Naive thymus-derived CD8-positive, alpha-beta T cell (primary cell): ENCODE measurements at regions of chr3 and their contacts with region 1.

Region 1: DNA sequence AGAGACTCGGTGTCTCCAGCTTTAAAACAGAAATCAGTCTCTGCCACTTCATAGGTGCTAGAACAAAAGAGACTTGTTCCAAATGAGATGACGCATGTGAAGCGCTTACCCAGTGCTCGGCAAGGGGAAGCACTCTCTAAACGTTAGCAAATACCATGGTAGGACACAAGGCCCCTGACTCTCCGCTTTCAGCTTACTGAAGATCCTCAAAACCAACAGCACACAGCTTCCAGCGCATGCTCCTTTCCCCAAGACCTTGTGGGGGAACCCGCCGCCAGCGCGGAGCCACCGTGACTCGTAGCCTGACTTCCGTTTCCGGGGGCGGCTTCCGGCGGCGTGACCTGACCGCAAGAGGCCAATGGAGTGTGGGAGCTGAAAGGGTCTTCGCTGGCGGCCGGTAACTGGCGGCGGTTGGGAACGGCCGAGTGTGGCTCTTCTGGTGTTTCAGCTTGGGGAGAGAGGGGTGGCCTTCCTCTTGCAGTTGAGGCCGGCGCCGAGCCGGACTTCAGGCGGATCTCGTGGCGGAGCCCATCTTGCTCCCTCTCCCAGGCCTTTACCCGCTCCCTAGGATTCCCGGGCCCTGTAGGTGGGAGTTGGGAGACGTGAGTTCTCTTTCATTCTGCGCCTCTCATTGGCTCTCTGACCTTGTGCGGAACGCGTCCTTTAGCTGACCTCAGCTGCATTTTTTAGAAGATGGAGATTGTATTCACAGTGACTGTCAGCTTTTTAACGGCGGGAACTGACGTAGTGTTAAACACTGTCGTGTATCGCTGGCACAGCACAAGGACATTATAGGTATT is at the start of gene THUMPD3:
- DNase-seq: peak; percentile 84 to 93 (median 87)
- ATAC-seq: peak; percentile 92 to 95
- H3K4me3 Mint-ChIP-seq: peak within 1 kb of the TSS; percentile 95 to 99 (median 98)
- H3K27ac Mint-ChIP-seq: peak within 1 kb of the TSS; percentile 97 to 99 (median 98)
- H3K4me1 Mint-ChIP-seq: peaks cover 4 to 37% (median 18%) of the 10 kb centered on the region in 4 donors
- H3K27me3 Mint-ChIP-seq: no peaks in the 10 kb centered on the region
- polyA plus RNA-seq, gene THUMPD3: 22.7 to 30.8 (median 23.5) TPM

Region 2: GRCh38 chr3:9649791-9650521 is 287.0 kb after region 1 on chr3:
- POLR2A ChIA-PET with region 1: interaction called, 14 read pairs
- DNase-seq: peak in 1 of 10 donors; percentile 7
- ATAC-seq: no peak
- H3K4me3 Mint-ChIP-seq: peak overlapping the region; percentile 80 to 99 (median 94)
- H3K27ac Mint-ChIP-seq: peak overlapping the region; percentile 88 to 98 (median 94)
- H3K4me1 Mint-ChIP-seq: peaks cover 18 to 51% (median 42%) of the 10 kb centered on the region in 4 donors
- H3K27me3 Mint-ChIP-seq: no peaks in the 10 kb centered on the region